ENCODE measurements at regions of chr4 and their contacts with region 1.

Region 1: GRCh38 chr4:152640058-152640833 is 39.6 kb downstream of the TMEM154 start:
- DNase-seq: peak in 2 of 9 experiments; percentile 24 to 43
- ATAC-seq: peak; percentile 38
- H3K4me3 ChIP-seq: no peak overlapping the region
- H3K4me3 Mint-ChIP-seq: no peak overlapping the region
- H3K27ac ChIP-seq: no peak overlapping the region
- H3K27ac Mint-ChIP-seq: no peak overlapping the region
- H3K4me1 ChIP-seq: no peaks in the 10 kb centered on the region
- H3K4me1 Mint-ChIP-seq: peaks cover 11% of the 10 kb centered on the region
- H3K27me3 ChIP-seq: no peaks in the 10 kb centered on the region
- H3K27me3 Mint-ChIP-seq: no peaks in the 10 kb centered on the region
- CTCF ChIP-seq: peak; percentile 85

Region 2: GRCh38 chr4:151117371-151117962 is 1522.8 kb before region 1 on chr4:
- CTCF ChIA-PET with region 1: no interaction called
- POLR2A ChIA-PET with region 1: no interaction called
- intact Hi-C with region 1: loop called in 1 of 2 experiments (anchors 5 kb)
- DNase-seq: peak in 8 of 9 experiments; percentile 24 to 65 (median 50)
- ATAC-seq: peak; percentile 80
- H3K4me3 ChIP-seq: no peak overlapping the region
- H3K4me3 Mint-ChIP-seq: no peak overlapping the region
- H3K27ac ChIP-seq: no peak overlapping the region
- H3K27ac Mint-ChIP-seq: no peak overlapping the region
- H3K4me1 ChIP-seq: no peaks in the 10 kb centered on the region
- H3K4me1 Mint-ChIP-seq: peaks cover 1% of the 10 kb centered on the region
- H3K27me3 ChIP-seq: no peaks in the 10 kb centered on the region
- H3K27me3 Mint-ChIP-seq: no peaks in the 10 kb centered on the region
- CTCF ChIP-seq: peak; percentile 86

Region 3: GRCh38 chr4:152408514-152409327 is 231.5 kb before region 1 on chr4:
- CTCF ChIA-PET with region 1: interaction called, 6 read pairs
- POLR2A ChIA-PET with region 1: no interaction called
- intact Hi-C with region 1: loop called in 1 of 2 experiments (anchors 1 kb)
- DNase-seq: peak in 3 of 9 experiments; percentile 10 to 60 (median 49)
- ATAC-seq: peak; percentile 40
- H3K4me3 ChIP-seq: no peak overlapping the region
- H3K4me3 Mint-ChIP-seq: no peak overlapping the region
- H3K27ac ChIP-seq: no peak overlapping the region
- H3K27ac Mint-ChIP-seq: no peak overlapping the region
- H3K4me1 ChIP-seq: no peaks in the 10 kb centered on the region
- H3K4me1 Mint-ChIP-seq: peaks cover 13% of the 10 kb centered on the region
- H3K27me3 ChIP-seq: no peaks in the 10 kb centered on the region
- H3K27me3 Mint-ChIP-seq: no peaks in the 10 kb centered on the region
- CTCF ChIP-seq: peak; percentile 57

Region 4: GRCh38 chr4:152454398-152455011 is 185.7 kb before region 1 on chr4:
- CTCF ChIA-PET with region 1: interaction called, 3 read pairs
- POLR2A ChIA-PET with region 1: no interaction called
- intact Hi-C with region 1: loop called in 1 of 2 experiments (anchors 2 kb)
- DNase-seq: peak in 1 of 9 experiments; percentile 21
- ATAC-seq: peak; percentile 36
- H3K4me3 ChIP-seq: no peak overlapping the region
- H3K4me3 Mint-ChIP-seq: no peak overlapping the region
- H3K27ac ChIP-seq: no peak overlapping the region
- H3K27ac Mint-ChIP-seq: no peak overlapping the region
- H3K4me1 ChIP-seq: peaks cover 13% of the 10 kb centered on the region
- H3K4me1 Mint-ChIP-seq: peaks cover 37% of the 10 kb centered on the region
- H3K27me3 ChIP-seq: no peaks in the 10 kb centered on the region
- H3K27me3 Mint-ChIP-seq: no peaks in the 10 kb centered on the region
- CTCF ChIP-seq: peak; percentile 62

Region 5: DNA sequence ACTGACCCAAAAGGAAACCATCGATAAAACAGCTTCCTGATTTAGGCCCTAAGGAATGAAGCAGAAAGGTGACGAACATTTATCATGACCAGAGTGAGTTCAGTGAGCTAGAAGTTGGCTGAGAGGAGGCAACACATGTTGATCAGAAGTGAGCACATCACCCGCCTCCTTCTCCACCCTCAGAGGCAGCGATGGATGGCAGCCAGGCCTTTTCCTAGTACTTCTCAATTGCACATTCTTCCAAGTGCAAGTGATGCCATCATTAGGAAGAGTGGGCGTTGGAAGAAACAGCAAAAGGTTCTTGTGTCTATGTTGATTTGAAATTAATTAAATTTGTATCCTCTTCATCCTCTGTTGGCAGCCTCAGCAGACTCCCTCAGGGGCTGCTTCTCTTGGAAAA is 12.1 kb before region 1 on chr4:
- CTCF ChIA-PET with region 1: interaction called, 14 read pairs
- POLR2A ChIA-PET with region 1: no interaction called
- intact Hi-C with region 1: no loop called
- DNase-seq: no peak
- ATAC-seq: no peak
- H3K4me3 ChIP-seq: no peak overlapping the region
- H3K4me3 Mint-ChIP-seq: no peak overlapping the region
- H3K27ac ChIP-seq: no peak overlapping the region
- H3K27ac Mint-ChIP-seq: no peak overlapping the region
- H3K4me1 ChIP-seq: no peaks in the 10 kb centered on the region
- H3K4me1 Mint-ChIP-seq: no peaks in the 10 kb centered on the region
- H3K27me3 ChIP-seq: no peaks in the 10 kb centered on the region
- H3K27me3 Mint-ChIP-seq: no peaks in the 10 kb centered on the region
- CTCF ChIP-seq: no peak

Region 6: GRCh38 chr4:152735396-152735859 is 95.2 kb after region 1 on chr4:
- CTCF ChIA-PET with region 1: interaction called, 10 read pairs
- POLR2A ChIA-PET with region 1: no interaction called
- intact Hi-C with region 1: loop called (anchors 2 to 5 kb)
- DNase-seq: peak in 2 of 9 experiments; percentile 32 to 45
- ATAC-seq: peak; percentile 38
- H3K4me3 ChIP-seq: no peak overlapping the region
- H3K4me3 Mint-ChIP-seq: no peak overlapping the region
- H3K27ac ChIP-seq: no peak overlapping the region
- H3K27ac Mint-ChIP-seq: no peak overlapping the region
- H3K4me1 ChIP-seq: no peaks in the 10 kb centered on the region
- H3K4me1 Mint-ChIP-seq: no peaks in the 10 kb centered on the region
- H3K27me3 ChIP-seq: no peaks in the 10 kb centered on the region
- H3K27me3 Mint-ChIP-seq: no peaks in the 10 kb centered on the region
- CTCF ChIP-seq: peak; percentile 10